Left ventricle myocardium superior (tissue), 1 donor: ENCODE measurements at regions of chr22 and their contacts with region 1.

Region 1: DNA sequence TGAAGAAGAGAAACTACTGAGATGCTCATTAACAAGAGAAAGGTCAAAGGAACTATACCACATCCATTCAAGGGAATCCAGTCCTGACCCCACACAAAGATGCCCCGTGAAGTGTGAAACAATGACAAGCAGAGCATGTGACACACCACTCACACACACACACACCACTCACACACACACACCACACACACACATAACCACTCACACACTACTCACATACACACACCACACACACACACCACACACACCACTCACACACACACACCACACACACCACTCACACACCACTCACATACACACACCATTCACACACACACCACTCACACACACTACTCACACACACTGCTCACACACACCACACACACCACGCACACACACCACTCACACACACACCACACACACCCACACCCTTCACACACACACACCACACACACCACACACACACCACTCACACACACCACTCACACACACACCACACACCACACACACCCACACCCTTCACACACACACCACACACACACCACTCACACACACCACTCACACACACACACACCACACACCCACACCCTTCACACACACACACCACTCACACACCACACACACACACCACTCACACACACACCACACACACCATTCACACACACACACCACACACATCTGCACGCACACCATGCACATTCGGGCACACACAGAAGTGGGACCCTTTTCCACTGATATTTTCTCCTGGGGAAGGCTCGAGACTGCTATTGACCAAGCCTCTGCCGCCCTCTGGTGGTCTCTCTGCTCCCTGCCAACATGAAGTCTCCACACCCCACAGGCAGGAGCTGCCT is 32.0 kb upstream of the COMT start:
- DNase-seq: peak; percentile 90
- ATAC-seq: peak; percentile 94

Region 2: DNA sequence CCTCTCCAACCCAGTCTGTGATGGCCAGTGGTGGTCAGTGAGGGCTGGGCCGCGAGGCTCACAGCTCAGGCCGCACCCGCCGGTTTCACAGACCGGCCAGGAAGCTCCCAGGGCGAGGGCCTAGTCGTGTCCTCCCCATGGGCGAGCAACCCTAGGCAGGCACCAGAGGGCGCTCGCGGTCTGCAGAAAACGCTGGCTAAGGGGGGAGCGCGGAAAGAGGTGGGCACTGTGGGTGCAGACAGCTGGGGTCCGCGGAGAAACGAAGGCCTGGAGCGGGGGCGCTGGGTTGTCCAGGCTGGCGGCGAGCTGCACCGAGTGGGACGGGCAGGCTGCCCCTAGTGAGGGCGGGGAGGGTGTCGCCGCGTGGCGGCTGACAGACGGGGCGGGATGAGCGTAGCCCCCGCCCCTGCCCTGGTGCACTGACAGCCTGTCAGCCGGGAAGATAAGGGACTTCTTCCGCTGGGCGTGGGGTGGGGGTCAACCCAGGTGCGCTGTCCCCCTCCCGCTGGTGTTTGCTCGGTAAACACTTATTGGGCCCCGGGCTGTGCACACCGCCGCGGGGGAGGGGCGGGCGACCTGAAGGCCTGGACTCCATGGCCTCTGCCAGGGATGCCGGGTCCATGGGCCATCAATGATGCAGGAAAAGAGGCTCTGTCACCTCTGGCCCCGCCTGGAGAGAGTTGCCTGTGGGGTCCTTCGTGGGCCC is 178.8 kb before region 1 on chr22:
- intact Hi-C with region 1: loop called (anchors 5 kb)
- DNase-seq: peak; percentile 92
- ATAC-seq: peak; percentile 92

Region 3: GRCh38 chr22:20141186-20142077 is 231.9 kb after region 1 on chr22:
- intact Hi-C with region 1: no loop called
- DNase-seq: no peak
- ATAC-seq: no peak